GM13977 (cell line): ENCODE measurements at regions of chr12 and their contacts with region 1.

Region 1: DNA sequence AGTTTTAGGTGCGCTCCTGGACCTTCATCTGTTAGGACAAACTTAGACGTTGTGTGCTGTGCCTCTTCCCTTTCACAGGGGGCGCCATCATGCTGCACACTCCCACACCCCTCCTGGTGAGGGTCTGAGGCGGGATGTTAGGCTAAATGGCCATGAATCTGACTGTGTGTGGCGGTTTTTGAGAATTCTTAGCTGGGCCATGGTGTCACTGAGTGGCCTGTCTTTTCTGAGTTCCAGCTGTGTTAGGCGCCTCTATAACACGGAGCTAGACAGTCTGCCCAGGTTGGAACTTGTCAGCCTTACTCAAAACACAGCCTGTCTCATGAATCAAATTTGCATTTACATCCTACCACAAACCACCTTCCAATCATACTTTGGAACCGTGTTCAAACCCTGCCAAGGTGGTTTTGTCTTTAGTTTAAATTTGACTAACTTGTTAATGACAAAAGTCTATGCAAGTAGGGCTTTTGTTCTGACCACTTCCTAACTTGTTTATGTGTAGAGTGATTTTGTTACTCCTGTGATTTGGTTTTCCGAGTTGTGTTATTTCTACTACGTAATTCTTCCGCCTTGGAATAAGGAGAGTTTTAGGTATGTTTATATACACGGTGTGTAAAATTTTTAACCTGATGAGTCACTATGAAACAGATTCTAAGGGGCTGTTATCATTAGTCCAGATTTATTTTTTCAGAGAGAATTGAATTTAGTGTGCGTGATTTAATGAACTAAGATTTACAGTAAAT is 19.6 kb downstream of the ACVR1B start:
- DNase-seq: peak; percentile 74
- CTCF ChIP-seq: peak; percentile 67

Region 2: DNA sequence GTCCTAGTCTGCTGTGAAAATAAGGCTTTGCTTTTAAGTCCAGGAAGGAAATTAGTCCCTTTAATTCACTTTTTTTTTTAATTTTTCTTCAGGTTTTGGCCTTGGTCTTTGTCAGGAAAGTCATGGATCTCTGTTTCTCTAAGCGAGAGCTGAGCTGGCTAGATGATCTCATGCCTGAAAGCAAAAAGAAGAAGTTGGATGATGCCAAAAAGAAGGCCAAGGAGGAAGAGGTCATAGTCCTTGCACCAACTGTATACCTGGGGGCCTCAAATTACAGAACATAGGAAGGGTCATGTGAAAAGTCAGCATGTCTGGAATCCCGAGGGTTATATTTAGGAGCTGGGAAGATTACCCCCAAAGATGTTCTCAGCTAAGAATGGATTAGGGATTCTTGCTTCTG is 474.2 kb before region 1 on chr12:
- in situ Hi-C with region 1: no loop called
- DNase-seq: no peak
- CTCF ChIP-seq: no peak

Region 3: DNA sequence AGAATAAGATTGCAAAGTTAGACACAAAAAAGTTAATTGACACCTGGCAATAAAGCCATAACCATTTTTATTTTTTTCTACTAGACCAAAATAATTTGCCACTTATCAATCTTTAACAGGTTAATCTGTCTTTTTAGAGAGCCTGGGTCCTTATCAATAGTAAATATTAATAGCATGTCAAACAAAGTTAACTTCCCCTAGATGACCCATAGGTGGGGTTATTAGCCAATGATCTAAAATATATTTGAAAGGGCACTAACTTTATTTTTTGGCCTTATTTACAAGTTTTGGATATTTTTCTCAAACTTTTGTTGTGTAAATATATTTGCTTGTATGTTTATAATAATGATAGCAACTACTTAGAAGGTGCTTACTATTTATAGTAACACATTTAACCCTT is 79.2 kb before region 1 on chr12:
- in situ Hi-C with region 1: loop called (anchors 10 kb)
- DNase-seq: no peak
- CTCF ChIP-seq: peak; percentile 25

Region 4: DNA sequence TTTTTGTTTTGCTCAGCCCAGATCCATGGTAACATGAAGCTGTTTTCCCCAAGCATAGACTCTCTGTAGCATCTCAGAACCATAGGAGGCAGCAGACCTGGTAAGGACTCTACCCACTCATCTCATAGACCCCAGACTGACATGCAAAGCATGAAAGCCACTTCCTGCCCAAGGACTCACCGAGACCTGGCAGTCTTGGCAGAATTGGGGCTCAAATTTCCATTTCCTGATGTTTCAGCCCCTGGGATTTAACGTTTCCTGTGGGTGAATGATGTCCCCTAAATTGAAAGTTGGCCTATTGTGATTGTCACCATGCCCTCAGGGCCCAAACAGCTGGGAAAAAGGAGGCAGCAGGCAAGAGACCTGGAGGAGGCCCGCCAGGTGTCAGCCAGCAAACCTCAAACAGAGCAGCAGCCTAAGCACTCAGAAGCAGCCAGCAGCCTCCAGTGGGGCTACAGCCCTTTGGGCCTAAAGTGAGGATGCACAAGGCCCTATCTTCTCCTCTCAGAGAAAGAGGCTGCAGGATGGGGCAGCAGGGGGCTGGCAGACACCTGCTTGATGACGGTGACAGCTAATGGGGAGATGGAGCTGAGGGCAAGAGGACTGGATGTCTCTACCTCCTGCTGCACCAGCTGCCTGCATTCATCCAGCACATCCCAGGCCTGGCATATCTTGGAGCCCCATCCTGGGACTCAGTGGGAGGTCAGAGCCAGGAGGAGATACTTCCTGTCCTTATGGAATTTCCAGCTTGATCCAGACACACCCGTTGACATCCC is 387.7 kb after region 1 on chr12:
- in situ Hi-C with region 1: no loop called
- DNase-seq: peak; percentile 82
- CTCF ChIP-seq: peak; percentile 20

Region 5: GRCh38 chr12:53538196-53538689 is 1567.2 kb after region 1 on chr12:
- in situ Hi-C with region 1: no loop called
- DNase-seq: no peak
- CTCF ChIP-seq: no peak